ENCODE measurements at regions of chr6 and their contacts with region 1.

Region 1: DNA sequence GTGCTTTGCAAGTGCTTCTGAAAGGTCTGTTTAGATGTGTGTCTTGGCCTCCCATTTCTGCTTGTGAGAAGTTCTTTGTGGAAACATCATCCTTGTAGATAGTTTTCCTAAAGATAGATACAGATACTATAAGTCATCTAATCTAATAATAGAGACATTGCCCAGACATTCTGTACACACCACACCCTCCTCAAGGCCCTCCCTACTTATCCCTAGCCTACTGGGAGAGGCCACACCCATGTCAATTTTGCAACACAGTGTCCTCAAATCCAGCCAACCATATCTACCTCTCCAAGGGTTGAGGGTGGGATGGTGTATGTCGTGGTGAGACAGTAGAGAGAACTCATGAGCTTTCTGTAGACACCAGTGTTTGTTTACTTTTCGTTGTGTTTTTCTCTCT is 6.2 kb downstream of the KDM1B start:
- DNase-seq: no peak
- H3K4me3 ChIP-seq: no peak overlapping the region
- H3K27ac ChIP-seq: peak overlapping the region in 4 of 8 donors; percentile 7 to 50 (median 23)
- H3K4me1 ChIP-seq: peaks cover 0 to 18% (median 7%) of the 10 kb centered on the region in 6 donors
- H3K27me3 ChIP-seq: no peaks in the 10 kb centered on the region
- CTCF ChIP-seq: no peak
- POLR2A ChIP-seq: no peak

Region 2: DNA sequence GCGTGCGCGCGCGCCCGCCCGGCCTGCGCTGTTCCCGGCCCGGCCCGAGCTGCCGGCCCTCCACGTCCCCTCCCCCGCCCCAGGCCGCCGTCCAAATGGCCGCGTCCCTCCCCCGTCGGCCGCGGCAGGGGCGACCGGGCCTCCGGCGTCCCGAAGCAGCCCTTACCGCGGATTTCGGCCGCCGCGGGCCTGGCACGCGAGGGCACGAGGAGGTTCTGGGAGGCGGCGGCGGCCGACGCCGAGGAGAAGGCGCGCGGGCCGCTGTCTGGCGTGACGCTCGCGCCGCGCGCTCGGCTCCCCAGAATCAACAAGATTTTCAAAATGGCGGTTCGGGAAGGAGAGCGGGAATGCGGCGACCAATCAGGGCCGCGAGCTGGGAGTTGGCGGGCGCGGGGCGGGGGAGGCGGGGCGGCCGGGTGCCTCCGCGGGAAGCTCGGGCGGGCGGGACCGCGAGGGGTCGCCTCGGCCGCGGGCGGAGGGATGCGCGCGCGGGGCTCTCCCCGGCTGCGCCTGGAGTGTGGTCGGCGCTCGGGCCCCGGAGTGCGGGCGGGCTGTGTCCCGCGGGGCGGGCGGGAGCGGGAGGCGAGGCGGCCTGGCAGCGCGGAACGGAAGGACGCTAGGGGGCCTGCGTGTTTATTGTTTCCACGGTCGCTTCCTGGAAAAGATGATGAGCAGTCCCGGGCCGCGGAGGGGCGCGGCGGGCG is 102.9 kb after region 1 on chr6 and contains the start of gene DEK:
- intact Hi-C with region 1: loop called (anchors 5 kb)
- DNase-seq: peak; percentile 94
- H3K4me3 ChIP-seq: peak within 1 kb of the TSS; percentile 74 to 97 (median 92)
- H3K27ac ChIP-seq: peak within 1 kb of the TSS; percentile 85 to 98 (median 96)
- H3K4me1 ChIP-seq: peaks cover 28 to 58% (median 44%) of the 10 kb centered on the region in 6 donors
- H3K27me3 ChIP-seq: no peaks in the 10 kb centered on the region
- CTCF ChIP-seq: peak in 9 of 11 experiments; percentile 19 to 79 (median 50)
- POLR2A ChIP-seq: peak in 2 of 3 donors; percentile 27
- total RNA-seq, gene DEK: 67.4 to 133 (median 79.3) TPM

Region 3: GRCh38 chr6:18931086-18931485 is 769.7 kb after region 1 on chr6:
- intact Hi-C with region 1: no loop called
- DNase-seq: no peak
- H3K4me3 ChIP-seq: no peak overlapping the region
- H3K27ac ChIP-seq: no peak overlapping the region
- H3K4me1 ChIP-seq: no peaks in the 10 kb centered on the region
- H3K27me3 ChIP-seq: no peaks in the 10 kb centered on the region
- CTCF ChIP-seq: no peak
- POLR2A ChIP-seq: no peak

Measured in spleen (tissue), 13 donors.